ENCODE measurements at regions of chr17 and their contacts with region 1.

Region 1: GRCh38 chr17:75784473-75785015 is at the start of gene UNK:
- DNase-seq: peak; percentile 99
- H3K4me3 ChIP-seq: peak within 1 kb of the TSS; percentile 74
- H3K27ac ChIP-seq: peak within 1 kb of the TSS; percentile 100
- H3K27me3 ChIP-seq: no peaks in the 10 kb centered on the region
- CTCF ChIP-seq: no peak
- polyA plus RNA-seq, gene UNK: 11.1 and 11.4 TPM in 2 replicates

Region 2: GRCh38 chr17:75795820-75796607 is 11.5 kb after region 1 on chr17:
- CTCF ChIA-PET with region 1: interaction called, 13 read pairs
- POLR2A ChIA-PET with region 1: interaction called, 31 read pairs
- DNase-seq: no peak
- H3K4me3 ChIP-seq: no peak overlapping the region
- H3K27ac ChIP-seq: no peak overlapping the region
- H3K27me3 ChIP-seq: no peaks in the 10 kb centered on the region
- CTCF ChIP-seq: no peak

Region 3: GRCh38 chr17:75814900-75815373 is 30.4 kb after region 1 on chr17:
- CTCF ChIA-PET with region 1: interaction called, 9 read pairs
- POLR2A ChIA-PET with region 1: interaction called, 19 read pairs
- DNase-seq: peak; percentile 39
- H3K4me3 ChIP-seq: no peak overlapping the region
- H3K27ac ChIP-seq: peak overlapping the region; percentile 75
- H3K27me3 ChIP-seq: no peaks in the 10 kb centered on the region
- CTCF ChIP-seq: no peak

Region 4: DNA sequence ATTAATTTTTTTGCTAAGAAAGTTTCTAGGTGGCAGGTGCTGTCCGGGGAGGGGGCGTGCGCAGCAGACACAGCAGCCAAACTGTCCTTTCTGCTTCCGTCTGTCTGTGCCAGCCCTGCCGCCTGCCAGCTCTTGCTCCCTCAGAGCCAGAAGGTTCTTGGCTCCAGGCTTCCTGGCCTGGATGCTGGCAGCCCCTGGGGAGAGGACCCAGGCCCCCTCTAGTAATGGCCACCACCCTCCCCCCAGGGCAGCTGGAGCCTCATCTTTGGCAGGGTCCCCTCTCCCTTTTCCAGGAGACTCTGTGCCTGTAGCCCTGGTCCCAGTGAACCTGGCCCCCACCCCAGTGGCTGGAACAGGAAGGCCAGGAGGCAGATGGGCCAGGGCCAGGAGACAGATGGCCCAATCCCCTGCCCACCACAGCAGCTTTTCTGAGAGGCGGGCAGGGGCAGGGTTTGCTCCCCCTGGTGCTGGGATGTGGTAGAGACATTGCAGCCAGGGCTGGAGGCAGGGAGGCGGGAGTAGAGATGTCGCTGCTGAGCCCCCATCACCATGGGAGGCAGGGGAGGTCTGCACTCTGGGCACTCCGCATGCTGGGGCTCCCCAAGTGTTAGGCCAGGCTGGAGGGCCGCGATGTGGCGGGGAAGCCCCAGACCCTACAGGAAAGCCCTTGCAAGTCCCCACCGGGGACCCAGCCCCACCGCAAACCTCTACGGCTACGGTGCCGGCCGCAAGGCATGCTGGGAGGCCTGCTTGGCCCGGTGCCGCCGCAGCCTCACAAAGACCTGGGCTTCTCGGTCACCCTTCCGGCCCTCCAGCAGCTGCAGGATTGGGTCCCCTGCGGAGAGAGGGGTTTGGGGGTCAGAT is 42.9 kb after region 1 on chr17:
- CTCF ChIA-PET with region 1: interaction called, 13 read pairs
- POLR2A ChIA-PET with region 1: interaction called, 17 read pairs
- DNase-seq: no peak
- H3K4me3 ChIP-seq: peak overlapping the region; percentile 32
- H3K27ac ChIP-seq: peak overlapping the region; percentile 11
- H3K27me3 ChIP-seq: no peaks in the 10 kb centered on the region
- CTCF ChIP-seq: peak; percentile 77

Region 5: GRCh38 chr17:75896415-75897159 is 112.0 kb after region 1 on chr17 and contains the start of gene TRIM65:
- CTCF ChIA-PET with region 1: interaction called, 4 read pairs
- POLR2A ChIA-PET with region 1: interaction called, 18 read pairs
- DNase-seq: no peak
- H3K4me3 ChIP-seq: peak within 1 kb of the TSS; percentile 88
- H3K27ac ChIP-seq: peak within 1 kb of the TSS; percentile 31
- H3K27me3 ChIP-seq: no peaks in the 10 kb centered on the region
- CTCF ChIP-seq: no peak
- polyA plus RNA-seq, gene TRIM65: 6.5 and 8.7 TPM in 2 replicates